ENCODE measurements at regions of chr17 and their contacts with region 1.

Region 1: GRCh38 chr17:45907750-45908395 is 13.5 kb downstream of the MAPT start:
- DNase-seq: no peak
- H3K4me3 Mint-ChIP-seq: no peak overlapping the region
- H3K27ac Mint-ChIP-seq: no peak overlapping the region
- H3K4me1 Mint-ChIP-seq: peaks cover 20% of the 10 kb centered on the region
- H3K27me3 Mint-ChIP-seq: peaks cover 25% of the 10 kb centered on the region

Region 2: GRCh38 chr17:45794840-45795239 is 113.0 kb before region 1 on chr17:
- intact Hi-C with region 1: no loop called
- DNase-seq: no peak
- H3K4me3 Mint-ChIP-seq: no peak overlapping the region
- H3K27ac Mint-ChIP-seq: no peak overlapping the region
- H3K4me1 Mint-ChIP-seq: no peaks in the 10 kb centered on the region
- H3K27me3 Mint-ChIP-seq: peaks cover 17% of the 10 kb centered on the region

Region 3: GRCh38 chr17:45948881-45949624 is 41.2 kb after region 1 on chr17:
- intact Hi-C with region 1: loop called (anchors 5 kb)
- DNase-seq: peak; percentile 42
- H3K4me3 Mint-ChIP-seq: peak overlapping the region; percentile 57
- H3K27ac Mint-ChIP-seq: no peak overlapping the region
- H3K4me1 Mint-ChIP-seq: no peaks in the 10 kb centered on the region
- H3K27me3 Mint-ChIP-seq: peaks cover 35% of the 10 kb centered on the region